IMR-90 (cell line): ENCODE measurements at regions of chr2 and their contacts with region 1.

Region 1: DNA sequence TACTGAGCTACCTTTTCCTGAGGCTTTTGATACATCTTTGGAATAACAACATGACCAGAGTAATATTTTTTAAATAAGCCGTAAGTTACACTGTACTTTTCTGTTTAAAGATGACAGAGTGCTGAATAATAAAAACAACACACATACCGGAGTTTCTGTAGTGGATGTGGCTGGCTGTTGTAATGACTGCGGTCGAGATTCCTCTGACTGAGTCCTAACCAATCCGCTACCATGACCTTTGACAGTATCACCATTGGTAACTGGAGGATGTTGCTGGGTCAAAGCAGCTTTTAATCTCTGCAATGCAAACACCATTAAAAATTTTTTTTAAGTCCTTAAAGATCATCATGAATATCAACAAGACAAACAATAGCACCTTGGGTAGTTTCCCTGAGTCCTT is 70.7 kb downstream of the ATF2 start:
- DNase-seq: peak; percentile 97
- ATAC-seq: peak; percentile 100
- H3K4me3 ChIP-seq: no peak overlapping the region
- H3K27ac ChIP-seq: no peak overlapping the region
- H3K4me1 ChIP-seq: peaks cover 3% of the 10 kb centered on the region
- H3K27me3 ChIP-seq: no peaks in the 10 kb centered on the region
- CTCF ChIP-seq: no peak
- POLR2A ChIP-seq: no peak
- RAD21 ChIP-seq: no peak

Region 2: DNA sequence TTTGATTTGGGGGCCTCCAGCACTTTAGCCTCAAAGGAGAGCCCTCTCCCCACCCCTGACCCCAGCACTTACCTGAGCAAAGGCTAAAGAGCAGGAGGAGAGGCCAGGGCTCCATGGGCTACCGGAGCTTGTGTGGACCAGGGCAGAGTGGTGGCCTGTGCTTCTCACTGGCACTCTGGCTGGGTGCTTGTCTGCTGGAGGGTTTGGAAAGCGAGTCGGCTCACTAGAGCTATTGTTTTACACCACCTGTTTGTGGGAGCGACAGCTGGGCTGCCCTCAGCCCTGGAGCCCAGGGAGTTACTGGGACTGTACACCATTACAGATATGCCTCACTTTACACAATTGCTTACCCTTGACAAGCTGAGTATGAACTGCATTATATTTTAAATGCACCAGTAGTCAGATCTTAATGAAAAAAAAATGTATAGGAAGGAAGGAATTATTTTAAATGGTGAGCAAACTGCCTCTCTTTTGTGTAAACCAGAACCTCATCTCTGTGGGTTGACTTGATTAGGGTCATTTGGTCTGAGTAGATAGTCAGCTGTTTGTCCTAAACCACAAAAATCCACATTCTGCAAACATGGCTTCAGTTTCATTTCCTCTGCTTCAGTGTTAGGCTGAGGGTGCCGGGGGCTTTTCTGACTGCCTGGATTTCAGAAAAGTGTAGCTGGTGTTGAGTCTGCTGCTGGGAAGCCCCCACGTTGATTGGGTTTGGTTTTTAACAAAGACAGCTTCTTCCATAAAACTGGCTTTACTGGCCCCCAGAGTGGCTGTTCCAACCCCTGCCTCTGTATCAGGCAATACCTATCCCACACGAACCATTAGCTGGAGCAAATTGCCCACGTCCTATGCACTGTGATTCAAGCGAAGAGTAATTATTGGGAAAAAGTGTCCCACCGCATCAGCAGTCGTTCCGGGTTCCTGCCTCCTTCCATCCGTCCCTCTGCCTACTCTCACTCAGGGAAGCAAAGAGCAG is 332.7 kb before region 1 on chr2 and contains the start of gene CHRNA1:
- CTCF ChIA-PET with region 1: interaction called, 3 read pairs
- POLR2A ChIA-PET with region 1: no interaction called
- dilution Hi-C with region 1: no loop called
- in situ Hi-C with region 1: no loop called
- intact Hi-C with region 1: loop called (anchors 5 kb)
- DNase-seq: peak; percentile 84
- ATAC-seq: peak; percentile 70
- H3K4me3 ChIP-seq: no peak within 1 kb of the TSS
- H3K27ac ChIP-seq: peak within 1 kb of the TSS; percentile 73
- H3K4me1 ChIP-seq: peaks cover 22% of the 10 kb centered on the region
- H3K27me3 ChIP-seq: no peaks in the 10 kb centered on the region
- CTCF ChIP-seq: no peak
- POLR2A ChIP-seq: no peak
- RAD21 ChIP-seq: no peak
- total RNA-seq, gene CHRNA1: 0.56 and 0.90 TPM in 2 replicates

Region 3: DNA sequence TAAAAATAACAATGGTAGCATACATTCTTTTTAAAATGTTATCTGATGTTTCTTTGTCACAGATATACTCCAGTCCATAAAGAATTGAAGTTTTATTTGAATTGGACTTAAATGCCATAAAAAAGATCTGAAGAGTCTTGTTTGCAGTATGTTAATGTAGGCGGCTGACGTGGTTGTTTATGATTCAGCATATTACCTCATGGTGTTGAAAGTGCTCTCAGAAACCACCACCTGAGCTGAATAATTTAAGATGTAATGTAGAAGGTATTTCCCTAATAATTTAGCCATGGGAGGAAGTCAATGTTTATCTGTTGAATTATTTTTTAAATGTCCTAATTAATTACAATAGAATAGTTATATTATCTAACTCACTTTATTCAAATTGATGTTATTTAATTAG is 33.6 kb before region 1 on chr2:
- CTCF ChIA-PET with region 1: no interaction called
- POLR2A ChIA-PET with region 1: no interaction called
- dilution Hi-C with region 1: no loop called
- in situ Hi-C with region 1: no loop called
- intact Hi-C with region 1: loop called (anchors 1 kb)
- DNase-seq: peak; percentile 32
- ATAC-seq: no peak
- H3K4me3 ChIP-seq: no peak overlapping the region
- H3K27ac ChIP-seq: no peak overlapping the region
- H3K4me1 ChIP-seq: no peaks in the 10 kb centered on the region
- H3K27me3 ChIP-seq: no peaks in the 10 kb centered on the region
- CTCF ChIP-seq: no peak
- POLR2A ChIP-seq: no peak
- RAD21 ChIP-seq: no peak

Region 4: GRCh38 chr2:175143678-175144077 is 46.4 kb after region 1 on chr2:
- CTCF ChIA-PET with region 1: no interaction called
- POLR2A ChIA-PET with region 1: no interaction called
- dilution Hi-C with region 1: no loop called
- in situ Hi-C with region 1: no loop called
- intact Hi-C with region 1: loop called (anchors 5 kb)
- DNase-seq: no peak
- ATAC-seq: no peak
- H3K4me3 ChIP-seq: no peak overlapping the region
- H3K27ac ChIP-seq: no peak overlapping the region
- H3K4me1 ChIP-seq: no peaks in the 10 kb centered on the region; the same call in 1 of the 2 replicates
- H3K27me3 ChIP-seq: no peaks in the 10 kb centered on the region
- CTCF ChIP-seq: no peak
- POLR2A ChIP-seq: no peak
- RAD21 ChIP-seq: no peak